GM23248 (cell line): ENCODE measurements at regions of chr6 and their contacts with region 1.

Region 1: GRCh38 chr6:119349323-119350042 is at the start of gene MAN1A1:
- DNase-seq: peak; percentile 87
- H3K4me3 ChIP-seq: peak within 1 kb of the TSS; percentile 85
- H3K27ac ChIP-seq: peak within 1 kb of the TSS; percentile 75
- H3K4me1 ChIP-seq: peaks cover 18% of the 10 kb centered on the region
- H3K27me3 ChIP-seq: no peaks in the 10 kb centered on the region
- total RNA-seq, gene MAN1A1: 31.4 and 33.4 TPM in 2 replicates

Region 2: GRCh38 chr6:118912646-118913045 is 436.8 kb before region 1 on chr6:
- in situ Hi-C with region 1: no loop called
- DNase-seq: no peak
- H3K4me3 ChIP-seq: no peak overlapping the region
- H3K27ac ChIP-seq: no peak overlapping the region
- H3K4me1 ChIP-seq: 0 out of 2 replicates have a peak, but pooled peaks cover 6% of the 10 kb centered on the region
- H3K27me3 ChIP-seq: no peaks in the 10 kb centered on the region

Region 3: DNA sequence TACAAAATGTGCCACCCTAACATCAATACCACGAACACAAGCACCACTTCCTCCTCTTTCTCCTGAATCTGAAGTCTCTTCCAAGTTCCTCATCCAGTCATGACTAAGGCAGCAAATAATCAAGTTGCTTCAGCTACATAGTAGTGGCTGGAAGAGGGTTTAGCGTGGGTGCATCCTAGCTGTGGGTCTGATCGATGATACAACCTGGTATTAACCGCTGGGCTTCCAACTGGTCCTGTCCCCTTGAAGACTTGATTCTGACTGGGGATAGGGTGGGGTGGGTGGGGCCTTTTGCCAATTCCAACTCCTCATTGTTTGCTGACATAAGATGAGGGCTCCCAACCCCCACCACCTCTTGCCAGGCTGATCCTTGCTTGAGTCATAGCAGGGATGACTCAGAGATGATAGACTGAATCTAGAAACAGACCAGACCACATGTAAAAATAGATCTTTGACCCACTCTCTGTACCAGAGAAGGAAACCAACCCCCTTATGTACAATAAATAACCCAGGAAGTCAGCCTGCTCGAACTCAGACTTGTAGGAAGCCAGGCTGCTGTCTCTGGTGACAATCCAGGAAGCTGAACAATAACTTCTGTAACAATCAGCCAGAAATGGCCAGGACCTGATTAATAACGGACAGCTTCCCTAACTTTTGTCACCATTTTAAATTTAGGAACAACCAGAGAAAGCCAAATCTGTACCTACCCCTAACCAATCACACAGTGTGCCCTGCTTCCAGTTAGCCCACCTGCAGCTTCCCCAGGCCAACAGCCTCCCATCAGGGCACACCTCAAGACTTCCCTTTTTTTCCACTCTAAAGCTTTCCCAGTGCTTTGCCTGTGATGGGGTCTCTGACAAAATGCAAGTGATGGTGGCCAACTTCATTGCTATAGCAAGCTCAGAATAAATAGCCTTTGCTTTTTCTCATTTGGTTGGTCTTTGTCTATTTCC is 202.1 kb before region 1 on chr6:
- in situ Hi-C with region 1: loop called (anchors 10 kb)
- DNase-seq: peak; percentile 97
- H3K4me3 ChIP-seq: peak overlapping the region; percentile 70
- H3K27ac ChIP-seq: peak overlapping the region; percentile 87
- H3K4me1 ChIP-seq: peaks cover 29% of the 10 kb centered on the region
- H3K27me3 ChIP-seq: no peaks in the 10 kb centered on the region

Region 4: GRCh38 chr6:119966486-119966885 is 617.0 kb after region 1 on chr6:
- in situ Hi-C with region 1: loop called (anchors 25 kb)
- DNase-seq: no peak
- H3K4me3 ChIP-seq: no peak overlapping the region
- H3K27ac ChIP-seq: no peak overlapping the region
- H3K4me1 ChIP-seq: no peaks in the 10 kb centered on the region
- H3K27me3 ChIP-seq: no peaks in the 10 kb centered on the region